Activated CD8-positive, alpha-beta T cell treated with anti-CD3 and anti-CD28 coated beads, Interleukin-2, amount 10 ng/mL, durations not matched to agents 7 days and 5 days (primary cell): ENCODE measurements at regions of chr17 and their contacts with region 1.

Region 1: DNA sequence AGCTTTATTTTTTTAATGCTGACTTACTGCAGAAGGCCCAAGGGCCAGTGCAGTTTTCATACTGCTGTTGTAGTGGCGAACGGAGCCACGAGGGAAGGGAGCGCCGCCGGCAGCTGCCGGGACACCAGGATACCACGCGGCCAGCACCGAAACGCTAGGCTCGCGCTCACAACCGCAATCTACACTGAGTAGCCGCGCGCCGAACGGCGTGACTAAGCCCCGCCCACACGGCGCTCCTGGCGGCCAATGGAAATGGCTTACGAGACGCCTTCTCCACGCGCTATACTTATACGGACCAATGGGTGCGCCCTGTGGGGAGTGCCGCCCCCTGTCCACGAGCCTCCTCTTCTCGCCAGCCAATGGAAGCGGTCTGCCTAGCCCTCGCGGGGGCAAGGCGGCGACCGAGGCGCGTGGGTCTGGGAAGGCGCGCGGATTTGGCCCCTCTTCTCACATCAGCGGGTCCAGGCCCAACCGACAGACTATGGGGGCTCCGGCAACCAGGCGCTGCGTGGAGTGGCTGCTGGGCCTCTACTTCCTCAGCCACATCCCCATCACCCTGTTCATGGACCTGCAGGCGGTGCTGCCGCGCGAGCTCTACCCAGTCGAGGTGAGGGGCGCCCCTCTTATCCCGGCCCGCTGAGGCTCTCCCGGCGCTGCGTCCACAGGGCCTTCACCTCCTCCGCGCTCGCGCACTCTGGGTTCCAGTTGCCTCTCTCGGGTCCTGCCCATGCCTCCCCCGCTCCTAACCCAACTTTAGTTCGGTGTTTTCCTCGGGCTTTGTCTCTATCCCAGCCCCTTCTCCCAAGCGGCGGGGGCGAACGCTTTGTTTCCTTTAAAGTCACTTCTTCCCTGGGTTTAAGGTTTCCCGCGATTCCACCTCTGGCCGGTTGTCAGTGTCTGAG is at the start of gene TMEM97:
- DNase-seq: peak; percentile 98
- ATAC-seq: peak; percentile 100
- H3K4me3 Mint-ChIP-seq: peak within 1 kb of the TSS; percentile 93
- H3K27ac Mint-ChIP-seq: peak within 1 kb of the TSS; percentile 87
- H3K4me1 Mint-ChIP-seq: peaks cover 43% of the 10 kb centered on the region
- H3K27me3 Mint-ChIP-seq: no peaks in the 10 kb centered on the region
- total RNA-seq, gene TMEM97: 31.2 to 32.0 TPM

Region 2: DNA sequence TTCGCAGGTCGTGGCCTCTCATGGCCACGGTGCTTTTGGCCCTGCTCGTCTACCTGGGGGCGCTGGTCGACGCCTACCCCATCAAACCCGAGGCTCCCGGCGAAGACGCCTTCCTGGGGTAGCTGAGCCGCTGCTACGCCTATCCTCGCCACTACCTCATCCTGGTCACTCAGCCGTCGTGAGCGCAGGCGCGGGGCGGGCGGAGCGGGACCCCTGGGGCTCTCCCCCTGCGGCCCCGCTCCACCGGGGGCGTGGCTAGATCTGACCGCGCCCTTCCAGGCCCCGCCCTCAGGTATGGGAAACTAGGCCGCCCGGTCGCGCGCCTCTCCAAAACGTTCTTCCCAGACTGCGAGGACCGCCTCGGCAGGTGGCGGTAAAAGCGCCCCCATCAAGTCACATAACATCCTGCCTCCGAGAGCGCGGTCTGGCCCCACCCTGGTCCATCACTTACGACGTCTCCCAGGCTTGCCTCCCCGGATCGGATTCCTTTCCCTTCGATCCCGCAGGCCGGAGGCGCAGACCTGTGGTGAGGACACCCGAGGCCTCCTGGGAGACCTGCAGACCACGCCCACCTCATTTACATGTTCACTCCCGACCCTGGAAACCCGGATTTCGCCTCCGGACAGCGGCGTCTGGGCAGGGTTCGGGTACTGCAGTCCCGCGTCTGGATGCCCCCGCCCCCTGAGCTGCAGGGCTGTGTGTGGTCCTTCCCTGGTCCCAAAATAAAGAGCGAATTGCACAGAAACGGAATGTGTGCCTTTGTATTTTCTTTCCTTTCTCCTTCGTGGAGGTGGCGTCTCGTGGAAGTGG is 91.5 kb before region 1 on chr17:
- CTCF ChIA-PET with region 1: no interaction called
- POLR2A ChIA-PET with region 1: no interaction called
- DNase-seq: peak; percentile 35
- ATAC-seq: peak; percentile 59
- H3K4me3 Mint-ChIP-seq: peak overlapping the region; percentile 73
- H3K27ac Mint-ChIP-seq: peak overlapping the region; percentile 20
- H3K4me1 Mint-ChIP-seq: peaks cover 18% of the 10 kb centered on the region
- H3K27me3 Mint-ChIP-seq: peaks cover 42% of the 10 kb centered on the region

Region 3: DNA sequence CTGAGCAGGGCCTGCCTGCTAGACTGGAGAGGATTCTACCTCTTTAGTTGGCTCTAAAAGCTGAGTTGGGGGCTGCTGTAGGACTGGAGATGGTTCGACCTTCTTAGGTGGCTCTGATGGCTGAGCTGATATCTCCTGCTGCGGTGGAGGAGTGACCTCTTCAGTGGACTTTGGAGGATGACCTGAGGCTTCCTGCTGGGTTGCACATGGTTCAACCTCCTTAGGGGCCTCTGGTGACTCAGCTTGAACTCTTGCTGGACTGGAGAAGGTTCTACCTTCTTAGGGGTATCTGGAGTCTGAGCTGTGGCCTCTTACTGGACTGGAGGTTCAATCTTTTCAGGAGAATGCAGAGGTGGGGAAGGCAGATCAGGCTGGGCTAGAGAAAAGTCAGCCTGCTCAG is 49.0 kb before region 1 on chr17:
- CTCF ChIA-PET with region 1: no interaction called
- POLR2A ChIA-PET with region 1: no interaction called
- DNase-seq: no peak
- ATAC-seq: no peak
- H3K4me3 Mint-ChIP-seq: no peak overlapping the region
- H3K27ac Mint-ChIP-seq: no peak overlapping the region
- H3K4me1 Mint-ChIP-seq: no peaks in the 10 kb centered on the region
- H3K27me3 Mint-ChIP-seq: peaks cover 42% of the 10 kb centered on the region

Region 4: DNA sequence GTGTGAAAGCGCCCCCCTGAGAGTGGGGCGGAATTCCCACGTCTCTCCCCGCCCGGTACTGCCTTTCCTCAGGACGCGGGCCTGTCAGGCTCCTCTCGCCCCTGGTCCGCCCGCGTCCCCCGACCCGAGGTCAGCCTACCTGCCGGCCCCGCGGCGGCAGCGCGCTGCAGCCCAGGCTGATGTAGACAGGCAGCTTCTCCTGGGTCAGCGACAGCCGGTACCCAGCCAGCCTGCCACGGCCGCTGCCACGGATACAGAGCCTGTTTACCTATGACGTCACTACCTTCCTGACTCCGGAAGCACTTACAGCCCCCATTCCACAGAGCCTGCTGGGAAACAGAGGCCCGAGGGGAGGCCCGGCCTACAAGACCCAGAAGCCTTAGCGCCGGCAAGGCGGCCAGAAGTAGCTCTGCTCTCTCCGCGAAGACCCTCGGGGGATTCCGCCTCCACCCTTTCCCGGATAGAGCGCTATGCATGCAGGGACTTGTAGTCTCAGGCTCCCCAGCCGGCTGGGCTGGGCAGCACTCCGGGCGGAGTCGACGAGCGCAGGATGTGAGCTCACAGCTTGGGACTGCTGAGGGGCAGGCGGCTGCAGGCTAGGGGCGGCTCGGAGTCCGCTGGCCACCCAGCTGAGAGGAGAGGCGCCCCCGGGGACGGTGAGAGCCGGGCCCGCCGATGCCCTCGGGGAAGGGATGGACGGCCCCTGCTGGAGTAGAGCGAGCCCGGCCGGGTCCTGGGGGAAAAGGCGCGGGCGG is 16.4 kb after region 1 on chr17 and contains the starts of genes IFT20 and TNFAIP1:
- CTCF ChIA-PET with region 1: interaction called, 10 read pairs
- POLR2A ChIA-PET with region 1: interaction called, 16 read pairs
- DNase-seq: peak; percentile 99
- ATAC-seq: peak; percentile 97
- H3K4me3 Mint-ChIP-seq: peak within 1 kb of the TSS; percentile 96
- H3K27ac Mint-ChIP-seq: peak within 1 kb of the TSS; percentile 95
- H3K4me1 Mint-ChIP-seq: peaks cover 31% of the 10 kb centered on the region
- H3K27me3 Mint-ChIP-seq: no peaks in the 10 kb centered on the region
- total RNA-seq, gene IFT20: 20.7 to 22.7 TPM
- total RNA-seq, gene TNFAIP1: 16.3 to 19.7 TPM

Region 5: DNA sequence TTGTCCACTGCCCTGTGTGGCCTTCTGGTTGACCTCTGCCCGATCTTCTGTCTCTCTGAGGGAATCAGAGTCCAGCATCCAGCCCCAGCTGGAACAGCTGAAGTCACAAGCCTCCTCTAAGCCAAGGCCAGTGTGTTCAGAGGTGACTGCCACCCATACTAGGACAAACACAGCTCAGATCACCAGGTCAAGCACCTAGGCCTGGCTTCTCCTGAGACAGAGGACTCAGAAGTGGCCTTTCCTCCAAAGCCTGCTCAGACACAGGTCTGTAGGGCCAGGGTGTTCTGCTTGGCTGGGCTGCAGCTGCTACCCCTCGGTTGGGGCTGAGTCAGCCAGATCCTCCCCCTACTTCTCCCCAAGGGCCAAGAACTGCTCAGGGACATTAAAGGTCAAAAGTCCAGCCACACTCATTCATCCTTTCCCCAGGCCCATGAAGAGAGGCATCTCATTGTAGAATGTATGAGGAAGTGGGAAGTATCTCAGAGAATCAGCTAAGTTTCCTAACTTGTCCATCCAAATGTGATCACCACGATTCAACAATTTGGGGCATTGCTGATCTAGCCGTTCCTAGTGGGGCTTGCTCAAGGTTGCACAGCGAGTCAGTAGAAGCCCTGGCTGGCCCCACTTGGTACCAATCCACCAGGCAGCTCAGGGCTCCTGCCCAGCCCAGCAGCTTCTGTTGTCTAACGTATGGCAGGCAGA is 79.4 kb after region 1 on chr17:
- CTCF ChIA-PET with region 1: no interaction called
- POLR2A ChIA-PET with region 1: no interaction called
- DNase-seq: no peak
- ATAC-seq: no peak
- H3K4me3 Mint-ChIP-seq: no peak overlapping the region
- H3K27ac Mint-ChIP-seq: no peak overlapping the region
- H3K4me1 Mint-ChIP-seq: peaks cover 9% of the 10 kb centered on the region
- H3K27me3 Mint-ChIP-seq: no peaks in the 10 kb centered on the region